GM12878 (cell line): ENCODE measurements at regions of chr15 and their contacts with region 1.

Region 1: DNA sequence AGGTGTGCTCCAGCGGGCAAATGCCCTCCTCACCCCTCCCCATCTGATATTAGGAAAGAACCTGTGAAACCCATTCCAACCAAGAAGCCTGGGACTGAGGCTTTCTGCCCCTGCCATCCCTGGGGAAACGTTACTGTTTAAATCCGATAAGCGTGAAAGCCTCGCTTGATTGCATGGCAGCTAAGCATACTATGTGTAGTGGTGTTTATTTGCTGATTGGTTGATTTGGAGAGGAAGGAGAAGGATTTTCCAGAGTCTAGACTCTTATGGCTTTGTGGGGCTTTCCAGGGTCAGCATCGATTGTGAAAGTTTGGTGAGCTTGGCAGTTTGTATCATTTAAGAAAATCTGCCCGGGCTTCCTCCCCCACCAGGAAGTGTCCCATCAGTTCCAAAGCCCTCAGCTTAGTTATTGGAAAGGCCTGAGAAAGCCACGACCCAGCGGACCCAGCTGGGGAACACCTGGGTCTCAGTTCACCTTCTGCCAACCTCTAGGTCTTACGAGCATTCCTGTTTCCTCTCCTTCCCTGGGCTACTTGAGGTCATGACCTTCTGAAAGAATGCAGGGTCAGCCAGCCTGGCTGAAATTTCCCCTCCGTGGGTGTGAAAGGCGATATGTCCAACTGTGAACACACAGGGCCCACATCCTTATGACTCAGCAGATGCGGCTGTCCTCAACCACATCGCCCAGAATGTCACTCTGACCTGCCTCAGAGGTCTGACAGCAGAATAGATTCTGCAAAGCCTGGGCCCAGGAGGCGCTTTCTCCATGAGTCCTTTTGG is 62.8 kb upstream of the HERC1 start:
- DNase-seq: peak; percentile 90
- ATAC-seq: peak; percentile 84
- H3K4me3 ChIP-seq: no peak overlapping the region
- H3K27ac ChIP-seq: peak overlapping the region; percentile 84
- H3K4me1 ChIP-seq: peaks cover 59% of the 10 kb centered on the region
- H3K27me3 ChIP-seq: no peaks in the 10 kb centered on the region
- CTCF ChIP-seq: no peak
- EP300 ChIP-seq: peak; percentile 93 to 95
- POLR2A ChIP-seq: no peak
- RAD21 ChIP-seq: no peak

Region 2: DNA sequence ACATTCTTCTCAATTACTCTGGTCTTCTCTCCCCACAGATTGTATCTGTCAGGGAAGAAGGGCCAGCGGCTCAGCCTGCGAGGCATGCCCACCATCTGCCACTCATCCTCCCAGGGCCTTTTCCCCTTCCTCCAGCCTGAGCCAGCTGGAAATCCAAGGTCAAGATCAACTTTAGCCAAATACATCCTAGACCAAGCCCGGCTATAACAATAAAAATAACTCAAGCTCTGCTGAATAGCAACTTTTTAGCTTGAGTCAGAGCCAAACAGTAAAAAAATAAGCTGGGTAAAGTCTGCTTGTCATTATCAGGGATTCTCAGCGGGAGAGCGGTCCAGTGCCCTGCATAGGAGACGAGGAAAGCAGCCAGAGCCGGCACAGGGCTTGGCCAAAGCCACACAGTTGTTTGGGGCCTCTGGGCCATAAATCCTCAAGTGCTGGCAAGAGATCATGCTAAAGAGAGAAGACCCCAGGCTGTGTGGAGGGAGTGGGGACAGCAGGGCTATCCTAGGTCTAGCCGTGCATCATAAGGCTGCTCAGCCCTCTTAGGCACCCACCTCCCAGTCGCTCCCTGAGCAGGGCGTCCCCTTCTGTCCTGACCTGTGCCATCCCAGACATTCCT is 13.4 kb after region 1 on chr15:
- CTCF ChIA-PET with region 1: interaction called, 4 read pairs
- POLR2A ChIA-PET with region 1: interaction called, 3 read pairs
- RAD21 ChIA-PET with region 1: interaction called, 18 read pairs
- SMC1A ChIA-PET with region 1: interaction called, 10 read pairs
- in situ Hi-C with region 1: no loop called
- intact Hi-C with region 1: no loop called
- DNase-seq: no peak
- ATAC-seq: no peak
- H3K4me3 ChIP-seq: no peak overlapping the region
- H3K27ac ChIP-seq: no peak overlapping the region
- H3K4me1 ChIP-seq: peaks cover 14% of the 10 kb centered on the region
- H3K27me3 ChIP-seq: no peaks in the 10 kb centered on the region
- CTCF ChIP-seq: no peak
- EP300 ChIP-seq: no peak
- POLR2A ChIP-seq: no peak
- RAD21 ChIP-seq: no peak

Region 3: GRCh38 chr15:64137226-64138220 is 241.0 kb after region 1 on chr15:
- CTCF ChIA-PET with region 1: no interaction called
- POLR2A ChIA-PET with region 1: no interaction called
- RAD21 ChIA-PET with region 1: no interaction called
- SMC1A ChIA-PET with region 1: no interaction called
- in situ Hi-C with region 1: no loop called
- intact Hi-C with region 1: no loop called
- DNase-seq: no peak
- ATAC-seq: peak; percentile 80
- H3K4me3 ChIP-seq: no peak overlapping the region
- H3K27ac ChIP-seq: no peak overlapping the region
- H3K4me1 ChIP-seq: peaks cover 2% of the 10 kb centered on the region; the same call in 1 of the 2 replicates
- H3K27me3 ChIP-seq: no peaks in the 10 kb centered on the region
- CTCF ChIP-seq: peak in 1 of 3 experiments; percentile 33; a peak in 2 of 6 replicates
- EP300 ChIP-seq: no peak
- POLR2A ChIP-seq: no peak
- RAD21 ChIP-seq: 0 out of 2 replicates have a peak, but pooled peaks have one; percentile 12